Caco-2 (cell line): ENCODE measurements at regions of chr4 and their contacts with region 1.

Region 1: DNA sequence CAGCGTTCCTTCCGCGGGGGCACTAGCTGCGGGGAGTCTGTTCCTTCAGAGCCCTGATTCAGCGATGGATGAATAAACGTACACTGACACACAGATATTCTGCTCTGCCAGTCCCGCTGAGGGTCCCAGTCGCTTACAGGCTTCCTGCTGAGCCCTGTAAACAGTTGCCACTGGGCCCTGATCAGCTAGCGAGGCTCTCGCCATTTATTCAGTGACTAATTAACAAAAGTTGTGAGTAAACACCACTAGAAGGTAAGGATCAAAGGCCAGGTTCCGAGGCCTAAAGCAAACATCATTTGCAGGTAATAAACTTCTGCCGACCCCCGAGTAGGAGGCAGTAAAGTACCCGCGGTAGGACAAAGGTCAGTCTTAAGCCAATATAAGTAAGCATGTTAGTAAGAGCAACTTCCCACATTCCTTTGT is 442.6 kb upstream of the GALNT7 start:
- DNase-seq: peak; percentile 81 to 93
- H3K4me3 ChIP-seq: peak overlapping the region; percentile 8; the same call in 1 of the 2 replicates
- H3K4me3 Mint-ChIP-seq: peak overlapping the region; percentile 18
- H3K27ac Mint-ChIP-seq: peak overlapping the region; percentile 15
- H3K4me1 ChIP-seq: peaks cover 33% of the 10 kb centered on the region
- H3K4me1 Mint-ChIP-seq: peaks cover 24% of the 10 kb centered on the region
- H3K27me3 ChIP-seq: no peaks in the 10 kb centered on the region
- H3K27me3 Mint-ChIP-seq: no peaks in the 10 kb centered on the region
- CTCF ChIP-seq: no peak

Region 2: DNA sequence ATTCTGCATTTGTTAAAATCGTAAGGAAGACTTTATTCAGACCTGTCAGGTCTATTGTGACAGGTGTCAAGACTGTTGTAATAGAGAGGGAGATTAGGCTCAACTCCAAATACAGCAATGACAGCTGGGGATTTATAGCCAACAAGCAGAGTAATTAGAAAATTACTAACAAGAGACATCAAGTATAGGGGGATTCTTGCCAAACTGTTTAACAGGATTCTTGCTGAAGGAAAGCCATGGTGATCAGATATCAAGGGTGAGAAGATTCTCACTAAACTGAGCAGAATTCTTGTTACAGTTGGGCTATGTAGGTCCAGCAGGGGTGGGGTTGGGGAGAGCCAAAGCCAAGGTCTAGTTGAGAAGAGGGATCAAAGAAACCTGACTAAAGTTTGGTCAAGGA is 18.4 kb before region 1 on chr4:
- CTCF ChIA-PET with region 1: no interaction called
- POLR2A ChIA-PET with region 1: no interaction called
- intact Hi-C with region 1: loop called (anchors 1 kb)
- DNase-seq: no peak
- H3K4me3 ChIP-seq: no peak overlapping the region
- H3K4me3 Mint-ChIP-seq: no peak overlapping the region
- H3K27ac Mint-ChIP-seq: no peak overlapping the region
- H3K4me1 ChIP-seq: 0 out of 2 replicates have a peak, but pooled peaks cover 5% of the 10 kb centered on the region
- H3K4me1 Mint-ChIP-seq: no peaks in the 10 kb centered on the region
- H3K27me3 ChIP-seq: no peaks in the 10 kb centered on the region
- H3K27me3 Mint-ChIP-seq: no peaks in the 10 kb centered on the region
- CTCF ChIP-seq: no peak

Region 3: DNA sequence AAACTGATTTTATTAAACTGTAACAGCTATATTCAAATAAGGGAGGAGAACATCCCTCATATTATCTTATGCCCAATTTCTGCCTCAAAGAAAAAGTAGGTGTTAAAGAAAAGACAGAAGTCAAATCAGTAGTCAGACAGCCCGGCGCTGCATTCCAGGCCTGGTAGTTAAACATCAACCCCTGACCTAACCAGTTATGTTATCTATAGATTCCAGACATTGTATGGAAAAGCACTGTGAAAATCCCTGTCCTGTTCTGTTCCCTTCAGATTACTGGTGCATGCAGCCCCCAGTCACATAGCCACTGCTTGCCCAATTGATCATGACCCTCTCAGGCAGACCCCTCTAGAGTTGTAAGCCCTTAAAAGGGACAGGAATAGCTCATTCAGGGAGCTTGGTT is 172.7 kb after region 1 on chr4:
- CTCF ChIA-PET with region 1: no interaction called
- POLR2A ChIA-PET with region 1: no interaction called
- intact Hi-C with region 1: loop called (anchors 5 kb)
- DNase-seq: peak; percentile 53 to 59
- H3K4me3 ChIP-seq: no peak overlapping the region
- H3K4me3 Mint-ChIP-seq: no peak overlapping the region
- H3K27ac Mint-ChIP-seq: peak overlapping the region; percentile 81
- H3K4me1 ChIP-seq: peaks cover 30% of the 10 kb centered on the region
- H3K4me1 Mint-ChIP-seq: no peaks in the 10 kb centered on the region
- H3K27me3 ChIP-seq: no peaks in the 10 kb centered on the region
- H3K27me3 Mint-ChIP-seq: no peaks in the 10 kb centered on the region
- CTCF ChIP-seq: no peak